CD8-positive, alpha-beta memory T cell (primary cell): ENCODE measurements at regions of chr4 and their contacts with region 1.

Region 1: DNA sequence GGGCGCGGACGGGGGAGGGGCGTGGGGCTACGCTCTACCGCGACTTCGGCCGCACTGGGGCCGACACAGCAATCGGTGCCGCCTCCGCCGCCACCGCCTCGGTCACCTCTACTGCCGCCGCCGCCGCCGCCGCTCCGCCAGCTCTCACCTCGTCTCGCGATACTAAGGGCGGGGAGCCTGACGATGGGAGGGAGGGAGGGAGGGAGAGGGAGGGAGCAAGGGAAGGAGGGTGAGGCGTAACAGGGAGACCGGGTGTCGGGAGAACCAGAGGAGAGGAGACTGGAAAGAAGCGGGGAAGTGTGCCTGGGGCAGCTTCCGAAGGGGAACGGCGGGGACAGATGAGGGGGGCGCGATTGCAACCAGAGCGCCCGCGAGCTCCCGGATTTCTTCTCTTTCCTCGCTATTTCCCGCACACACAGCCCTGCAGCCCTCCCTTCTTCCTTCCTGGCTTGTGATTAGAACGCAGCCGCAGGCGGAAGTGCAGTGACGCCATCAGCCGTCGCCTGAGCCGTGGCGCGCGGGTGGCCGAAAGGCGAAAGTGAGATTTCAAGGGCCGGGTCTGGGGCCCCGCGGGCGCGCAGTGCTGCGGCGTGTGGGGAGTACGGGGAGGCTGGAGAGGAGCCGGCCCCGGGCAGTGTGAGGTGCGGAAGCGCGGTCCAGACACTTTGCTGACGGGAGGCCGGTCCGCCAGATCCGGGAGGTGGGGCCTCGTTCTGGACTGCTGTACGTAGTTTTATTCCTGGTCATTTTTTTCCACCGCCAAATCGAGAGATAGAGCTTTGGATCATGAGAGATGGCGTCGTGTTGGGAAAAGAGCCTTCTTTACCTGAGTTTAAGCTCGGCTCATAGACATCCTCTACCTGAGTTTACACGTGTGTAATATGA is at the start of gene ANKRD17:
- DNase-seq: peak; percentile 84 to 93 (median 91)
- H3K4me3 ChIP-seq: peak within 1 kb of the TSS; percentile 91
- H3K4me3 Mint-ChIP-seq: peak within 1 kb of the TSS; percentile 93 to 100 (median 99)
- H3K27ac ChIP-seq: peak within 1 kb of the TSS; percentile 96
- H3K27ac Mint-ChIP-seq: peak within 1 kb of the TSS; percentile 96 to 100 (median 100)
- H3K4me1 ChIP-seq: peaks cover 33% of the 10 kb centered on the region
- H3K4me1 Mint-ChIP-seq: peaks cover 52 to 71% (median 68%) of the 10 kb centered on the region in 3 donors
- H3K27me3 ChIP-seq: no peaks in the 10 kb centered on the region
- H3K27me3 Mint-ChIP-seq: peaks cover 0 to 5% of the 10 kb centered on the region in 2 donors
- total RNA-seq, gene ANKRD17: 57.6 to 61.9 TPM

Region 2: DNA sequence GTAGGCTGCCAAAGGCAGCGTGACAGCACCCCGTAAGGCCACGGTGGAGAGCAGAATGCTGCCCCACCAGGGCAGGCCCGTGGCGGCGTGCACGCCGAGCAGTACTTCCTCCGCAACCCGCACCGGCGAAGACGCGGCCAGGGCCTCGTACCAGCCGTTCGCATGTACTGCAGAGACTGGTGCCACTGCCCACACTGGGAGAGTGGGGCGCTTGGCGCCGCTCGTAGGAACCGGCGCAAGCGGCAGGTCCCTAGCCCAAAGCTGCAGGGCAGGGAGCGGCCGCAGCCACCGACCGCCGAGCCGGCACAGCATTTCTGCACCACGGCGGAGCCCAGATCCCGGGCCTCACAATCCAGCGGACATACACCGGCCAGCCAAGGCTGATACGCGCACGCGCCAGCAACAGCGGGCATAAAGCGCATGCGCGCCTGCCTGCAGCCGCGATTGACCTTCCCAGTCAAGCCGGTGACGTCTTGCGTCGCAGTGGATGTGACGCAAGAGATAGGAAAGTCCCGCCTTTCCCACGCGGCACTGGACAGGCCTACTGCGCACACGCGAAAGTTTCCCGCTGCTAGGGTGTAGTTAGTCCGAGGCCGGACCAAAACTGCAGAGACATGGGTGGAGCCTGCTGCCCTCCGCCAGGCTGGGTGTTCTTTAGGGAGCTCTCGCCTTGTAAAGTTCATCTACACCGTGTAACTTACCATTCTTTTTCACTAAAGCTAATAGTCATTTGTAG is 189.4 kb before region 1 on chr4 and contains the start of gene COX18:
- CTCF ChIA-PET with region 1: interaction called, 7 read pairs
- POLR2A ChIA-PET with region 1: interaction called, 15 read pairs
- DNase-seq: peak; percentile 90 to 97 (median 95)
- H3K4me3 ChIP-seq: peak within 1 kb of the TSS; percentile 80
- H3K4me3 Mint-ChIP-seq: peak within 1 kb of the TSS; percentile 83 to 94 (median 90)
- H3K27ac ChIP-seq: peak within 1 kb of the TSS; percentile 97
- H3K27ac Mint-ChIP-seq: peak within 1 kb of the TSS; percentile 98 to 100 (median 100)
- H3K4me1 ChIP-seq: peaks cover 34% of the 10 kb centered on the region
- H3K4me1 Mint-ChIP-seq: peaks cover 34 to 49% (median 46%) of the 10 kb centered on the region in 3 donors
- H3K27me3 ChIP-seq: no peaks in the 10 kb centered on the region
- H3K27me3 Mint-ChIP-seq: no peaks in the 10 kb centered on the region
- total RNA-seq, gene COX18: 26.4 to 27.6 TPM